ENCODE measurements at regions of chr18 and their contacts with region 1.

Region 1: DNA sequence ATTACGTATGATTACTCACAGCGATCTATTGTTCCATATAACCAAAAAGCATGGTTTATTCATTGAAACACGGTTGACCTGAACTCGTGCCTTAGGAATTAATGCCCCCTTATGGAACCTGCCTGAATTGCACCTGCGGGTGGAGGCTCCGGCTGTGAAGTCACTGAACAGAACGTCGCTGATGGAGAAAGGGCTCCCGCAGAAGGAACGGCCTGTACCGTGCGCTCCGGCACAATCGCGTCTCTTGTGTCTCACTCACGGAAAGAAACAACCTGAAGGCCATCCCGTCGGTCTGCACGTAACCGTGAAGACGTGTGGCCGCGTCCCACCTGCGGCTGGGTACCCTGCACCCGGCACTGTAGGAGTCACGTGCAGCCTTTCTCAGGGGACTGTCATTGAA is 133.1 kb downstream of the NFATC1 start:
- DNase-seq: peak; percentile 38 to 65
- ATAC-seq: peak; percentile 73

Region 2: DNA sequence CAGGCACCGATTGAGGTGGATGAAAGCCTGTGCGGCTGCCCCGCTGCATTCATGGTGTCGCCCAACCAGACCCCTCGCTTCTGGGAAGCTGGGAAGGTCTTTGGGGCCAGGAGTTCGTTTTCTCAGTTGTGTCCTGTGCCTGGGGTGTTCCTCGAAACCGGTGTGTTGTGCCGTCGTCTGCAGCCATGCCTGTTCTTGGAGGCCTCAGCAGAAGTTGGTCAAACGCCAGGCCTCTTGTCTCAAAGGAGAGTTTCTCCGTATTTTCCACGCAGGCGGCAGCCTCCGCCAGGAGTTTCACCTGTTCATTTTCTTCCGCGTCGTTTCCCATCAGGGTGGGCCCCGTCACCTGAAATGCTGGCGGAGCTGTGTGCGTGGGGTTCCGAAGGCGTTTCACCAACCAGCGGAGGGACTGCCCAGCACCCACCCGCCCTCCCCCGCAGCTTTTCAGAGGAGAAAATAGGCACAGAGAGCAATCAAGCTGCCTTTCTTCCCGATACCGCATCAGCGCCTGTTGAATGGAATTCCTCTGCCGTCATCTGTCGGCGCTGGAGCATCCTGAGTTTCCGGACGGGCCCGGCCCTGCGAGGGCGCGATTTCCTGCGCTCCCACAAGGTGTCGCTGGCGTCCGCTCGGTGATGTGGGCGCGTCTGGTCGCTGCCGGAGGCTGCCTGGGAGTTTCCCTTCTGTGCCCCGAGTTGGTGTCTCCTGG is 150.2 kb before region 1 on chr18:
- intact Hi-C with region 1: loop called (anchors 5 kb)
- DNase-seq: peak; percentile 62 to 81
- ATAC-seq: peak; percentile 83

Region 3: GRCh38 chr18:79644006-79644665 is 115.3 kb after region 1 on chr18:
- intact Hi-C with region 1: loop called in 1 of 2 experiments (anchors 5 kb)
- DNase-seq: peak; percentile 47 to 65
- ATAC-seq: peak; percentile 82

Measured in left colon (tissue), 2 donors.